AG04450 (cell line): ENCODE measurements at regions of chr17 and their contacts with region 1.

Region 1: DNA sequence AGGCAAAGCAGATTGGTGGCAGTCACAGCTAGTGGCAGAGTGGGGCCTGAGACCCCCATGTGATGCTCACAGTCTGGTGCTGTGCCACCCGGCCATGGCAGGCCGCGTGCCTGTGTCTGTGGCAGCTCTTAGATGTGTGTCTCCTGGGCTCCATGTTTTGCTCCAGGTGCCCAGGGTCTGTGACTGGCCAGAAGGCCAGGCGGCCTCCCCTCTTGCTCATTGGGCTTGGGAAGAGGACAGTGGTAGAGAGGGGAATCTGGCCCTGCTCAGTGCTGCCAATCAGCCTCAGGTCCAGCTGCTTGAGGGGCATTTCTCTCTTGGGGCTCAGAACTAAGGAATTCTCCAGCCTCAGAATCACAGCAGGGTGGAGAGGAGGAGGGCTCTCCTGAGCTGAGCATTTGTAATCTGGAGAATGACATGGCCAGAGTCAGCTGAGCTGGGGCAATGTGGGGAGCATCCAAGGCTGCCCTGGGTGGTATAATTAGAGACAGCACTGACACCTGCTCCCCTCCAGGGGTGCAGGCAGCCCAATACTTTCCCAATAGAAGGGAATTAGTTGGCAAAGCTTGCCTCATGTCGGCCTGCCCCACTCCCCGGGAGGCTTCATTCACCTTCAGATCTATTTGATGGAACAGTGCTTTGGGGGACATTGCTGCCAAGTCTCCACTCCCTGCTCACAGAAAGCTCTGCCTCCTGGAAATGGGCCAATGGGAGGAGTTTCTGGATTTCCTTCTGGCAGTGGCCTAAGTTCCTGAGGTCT is 2.7 kb upstream of the LASP1NB start:
- DNase-seq: no peak
- H3K4me3 ChIP-seq: no peak overlapping the region
- H3K27ac ChIP-seq: peak overlapping the region; percentile 39
- H3K27me3 ChIP-seq: no peaks in the 10 kb centered on the region
- CTCF ChIP-seq: no peak

Region 2: GRCh38 chr17:38752119-38752929 is 170.4 kb before region 1 on chr17 and contains the start of gene PSMB3:
- CTCF ChIA-PET with region 1: interaction called, 4 read pairs
- POLR2A ChIA-PET with region 1: interaction called, 11 read pairs
- DNase-seq: peak; percentile 97
- H3K4me3 ChIP-seq: peak within 1 kb of the TSS; percentile 99
- H3K27ac ChIP-seq: peak within 1 kb of the TSS; percentile 70
- H3K27me3 ChIP-seq: no peaks in the 10 kb centered on the region
- CTCF ChIP-seq: no peak
- polyA plus RNA-seq, gene PSMB3: 234 and 276 TPM in 2 replicates

Region 3: DNA sequence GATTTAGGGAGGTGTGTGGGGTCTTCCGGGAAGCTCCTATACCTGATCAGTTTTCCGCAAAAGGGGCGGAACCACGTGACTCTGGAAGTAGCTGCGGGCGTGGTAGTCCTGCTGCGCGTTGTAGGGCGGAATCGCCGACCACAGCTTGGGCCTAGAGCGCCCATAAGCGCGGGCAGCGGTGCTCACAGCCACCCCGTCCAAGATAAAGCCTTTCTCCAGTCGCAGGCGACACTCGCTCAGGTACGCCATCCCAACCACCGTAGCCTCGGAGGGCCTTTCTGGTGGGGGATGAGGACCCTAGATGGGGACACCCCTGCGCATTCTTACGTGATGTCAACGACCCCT is 81.6 kb before region 1 on chr17:
- CTCF ChIA-PET with region 1: no interaction called
- POLR2A ChIA-PET with region 1: no interaction called
- DNase-seq: no peak
- H3K4me3 ChIP-seq: no peak overlapping the region
- H3K27ac ChIP-seq: no peak overlapping the region
- H3K27me3 ChIP-seq: no peaks in the 10 kb centered on the region
- CTCF ChIP-seq: no peak

Region 4: GRCh38 chr17:38853292-38854219 is 69.2 kb before region 1 on chr17 and contains the start of gene RPL23:
- CTCF ChIA-PET with region 1: interaction called, 11 read pairs
- POLR2A ChIA-PET with region 1: interaction called, 4 read pairs
- DNase-seq: peak; percentile 89
- H3K4me3 ChIP-seq: peak within 1 kb of the TSS; percentile 91
- H3K27ac ChIP-seq: peak within 1 kb of the TSS; percentile 90
- H3K27me3 ChIP-seq: no peaks in the 10 kb centered on the region
- CTCF ChIP-seq: no peak
- polyA plus RNA-seq, gene RPL23: 2,769 and 3,155 TPM in 2 replicates

Region 5: GRCh38 chr17:39002991-39003715 is 80.4 kb after region 1 on chr17:
- CTCF ChIA-PET with region 1: no interaction called
- POLR2A ChIA-PET with region 1: no interaction called
- DNase-seq: no peak
- H3K4me3 ChIP-seq: no peak overlapping the region
- H3K27ac ChIP-seq: no peak overlapping the region
- H3K27me3 ChIP-seq: peaks cover 10% of the 10 kb centered on the region
- CTCF ChIP-seq: no peak